ENCODE measurements at regions of chr11 and their contacts with region 1.

Region 1: DNA sequence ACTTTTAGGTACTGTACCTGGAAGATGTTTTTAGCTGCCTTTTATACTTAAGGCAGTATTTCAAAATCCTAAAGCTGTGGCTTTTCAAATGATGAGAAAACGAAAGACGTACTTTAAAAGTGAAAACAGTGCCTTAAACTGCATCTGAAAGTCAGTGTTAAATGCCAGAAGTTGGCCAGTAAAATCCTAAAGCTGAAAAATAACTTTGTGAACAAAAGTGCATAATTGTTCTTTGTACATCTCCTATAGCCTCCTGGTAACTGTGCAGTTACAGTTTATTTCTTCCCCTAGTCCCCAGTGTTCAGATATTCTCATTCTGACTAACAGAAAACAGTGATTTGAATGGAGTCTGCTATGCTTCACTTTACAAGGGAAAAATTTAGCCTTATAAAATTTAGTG is 6.8 kb downstream of the EED start:
- DNase-seq: no peak
- ATAC-seq: no peak
- H3K4me3 ChIP-seq: no peak overlapping the region
- H3K27ac ChIP-seq: no peak overlapping the region
- H3K4me1 ChIP-seq: no peaks in the 10 kb centered on the region
- H3K27me3 ChIP-seq: no peaks in the 10 kb centered on the region
- CTCF ChIP-seq: no peak
- POLR2A ChIP-seq: no peak
- RAD21 ChIP-seq: no peak

Region 2: GRCh38 chr11:85961930-85962363 is 289.4 kb before region 1 on chr11:
- CTCF ChIA-PET with region 1: interaction called, 10 read pairs
- POLR2A ChIA-PET with region 1: no interaction called
- dilution Hi-C with region 1: no loop called
- in situ Hi-C with region 1: no loop called
- intact Hi-C with region 1: no loop called
- DNase-seq: peak; percentile 67
- ATAC-seq: no peak; the same call in 1 of the 2 replicates
- H3K4me3 ChIP-seq: no peak overlapping the region
- H3K27ac ChIP-seq: no peak overlapping the region
- H3K4me1 ChIP-seq: peaks cover 10% of the 10 kb centered on the region
- H3K27me3 ChIP-seq: no peaks in the 10 kb centered on the region
- CTCF ChIP-seq: no peak
- POLR2A ChIP-seq: no peak
- RAD21 ChIP-seq: no peak

Measured in IMR-90 (cell line).